CD14-positive monocyte (primary cell): ENCODE measurements at regions of chr5 and their contacts with region 1.

Region 1: DNA sequence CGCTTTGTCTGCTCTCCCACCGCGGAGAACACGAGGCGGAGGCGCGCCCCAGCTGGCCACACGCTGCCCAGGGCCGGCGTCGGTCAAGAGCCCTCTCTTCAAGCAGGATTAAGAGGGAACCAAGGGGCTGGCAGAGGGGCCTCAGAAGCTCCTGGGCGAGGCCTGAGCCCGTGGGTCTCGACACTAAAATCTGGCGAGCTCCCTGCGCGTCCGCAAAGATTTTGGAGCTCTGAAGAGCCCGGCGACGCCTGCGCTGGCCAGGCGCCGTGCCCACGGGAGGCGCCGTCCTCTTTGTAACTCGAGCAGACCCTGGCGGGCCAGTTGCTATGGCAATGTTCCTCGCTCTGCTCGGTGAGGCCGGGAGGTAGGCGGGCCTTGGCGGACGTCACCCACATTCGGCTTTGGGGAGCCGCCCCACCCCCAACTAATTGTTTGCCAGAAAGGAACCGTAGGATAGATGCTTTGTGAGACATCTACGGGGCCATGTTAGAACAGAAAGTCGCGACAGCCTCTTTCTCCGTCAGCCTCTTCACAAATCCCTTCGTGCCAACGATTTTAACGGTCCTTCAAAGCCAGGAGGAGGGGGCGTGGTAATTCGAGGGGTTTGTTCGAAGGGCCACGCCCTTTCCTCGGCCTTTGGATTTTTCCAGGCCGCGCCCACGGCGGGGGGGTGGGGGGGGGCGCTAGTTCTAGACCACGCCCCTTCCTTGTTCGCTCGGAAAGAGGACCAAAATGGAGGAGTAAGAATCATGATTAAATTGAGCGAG is 714 bp upstream of the CNOT8 start:
- DNase-seq: peak; percentile 89 to 91 (median 91)
- H3K4me3 ChIP-seq: peak overlapping the region; percentile 87 to 96 (median 89)
- H3K4me3 Mint-ChIP-seq: peak overlapping the region; percentile 77 to 96
- H3K27ac ChIP-seq: peak overlapping the region; percentile 96 to 98
- H3K27ac Mint-ChIP-seq: peak overlapping the region; percentile 93 to 99 (median 99)
- H3K4me1 ChIP-seq: peaks cover 37 to 57% of the 10 kb centered on the region in 2 donors
- H3K4me1 Mint-ChIP-seq: peaks cover 46% of the 10 kb centered on the region
- H3K27me3 ChIP-seq: no peaks in the 10 kb centered on the region
- H3K27me3 Mint-ChIP-seq: peaks cover 0 to 5% (median 2%) of the 10 kb centered on the region in 3 donors
- CTCF ChIP-seq: no peak

Region 2: DNA sequence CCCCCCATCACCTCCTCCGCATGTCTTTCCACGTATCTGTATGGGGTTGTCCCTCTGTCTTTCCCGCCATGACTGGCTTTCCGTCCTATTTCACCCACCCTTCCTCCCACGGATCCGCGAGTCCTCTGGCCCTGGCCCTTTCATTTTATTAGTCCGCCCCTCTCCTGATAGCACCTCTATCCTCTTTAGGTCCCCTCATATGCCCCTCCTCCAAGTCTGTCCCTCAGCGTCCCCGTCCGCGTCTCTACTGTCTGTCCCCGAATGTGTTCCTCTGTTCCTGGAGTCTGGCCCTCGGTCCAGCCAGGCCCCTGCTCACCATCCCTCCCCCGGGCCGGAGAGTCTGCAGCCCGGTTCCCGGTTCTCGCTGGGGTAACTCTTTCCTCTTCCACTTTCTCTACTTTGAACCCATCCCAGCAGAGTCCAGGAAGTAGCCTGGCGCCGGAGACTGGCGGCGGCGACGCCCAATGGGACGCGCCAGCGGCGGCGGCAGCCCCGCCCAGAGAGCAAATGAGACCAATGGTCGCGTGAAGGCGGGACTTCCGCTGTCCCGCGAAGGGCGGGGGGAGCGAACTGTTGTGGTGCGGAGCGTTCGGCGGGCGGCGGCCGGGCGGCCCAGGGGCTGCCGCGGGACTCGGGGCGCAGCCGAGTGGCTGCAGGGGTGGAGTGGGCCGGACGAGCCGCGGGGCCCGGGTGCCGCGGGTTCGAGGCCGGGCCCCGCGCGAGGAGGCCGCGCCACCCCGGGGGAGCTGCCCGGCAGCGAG is 412.1 kb before region 1 on chr5 and contains the start of gene SAP30L:
- intact Hi-C with region 1: loop called in 1 of 2 experiments (anchors 5 kb)
- DNase-seq: peak; percentile 93 to 95 (median 93)
- H3K4me3 ChIP-seq: peak within 1 kb of the TSS; percentile 91 to 94 (median 91)
- H3K4me3 Mint-ChIP-seq: peak within 1 kb of the TSS; percentile 98
- H3K27ac ChIP-seq: peak within 1 kb of the TSS; percentile 73 to 84
- H3K27ac Mint-ChIP-seq: peak within 1 kb of the TSS; percentile 87 to 96 (median 93)
- H3K4me1 ChIP-seq: peaks cover 34 to 43% of the 10 kb centered on the region in 2 donors
- H3K4me1 Mint-ChIP-seq: peaks cover 38% of the 10 kb centered on the region
- H3K27me3 ChIP-seq: no peaks in the 10 kb centered on the region
- H3K27me3 Mint-ChIP-seq: peaks cover 0 to 5% (median 0%) of the 10 kb centered on the region in 3 donors
- CTCF ChIP-seq: no peak
- polyA plus RNA-seq, gene SAP30L: 21.1 to 36.1 (median 29.4) TPM

Region 3: DNA sequence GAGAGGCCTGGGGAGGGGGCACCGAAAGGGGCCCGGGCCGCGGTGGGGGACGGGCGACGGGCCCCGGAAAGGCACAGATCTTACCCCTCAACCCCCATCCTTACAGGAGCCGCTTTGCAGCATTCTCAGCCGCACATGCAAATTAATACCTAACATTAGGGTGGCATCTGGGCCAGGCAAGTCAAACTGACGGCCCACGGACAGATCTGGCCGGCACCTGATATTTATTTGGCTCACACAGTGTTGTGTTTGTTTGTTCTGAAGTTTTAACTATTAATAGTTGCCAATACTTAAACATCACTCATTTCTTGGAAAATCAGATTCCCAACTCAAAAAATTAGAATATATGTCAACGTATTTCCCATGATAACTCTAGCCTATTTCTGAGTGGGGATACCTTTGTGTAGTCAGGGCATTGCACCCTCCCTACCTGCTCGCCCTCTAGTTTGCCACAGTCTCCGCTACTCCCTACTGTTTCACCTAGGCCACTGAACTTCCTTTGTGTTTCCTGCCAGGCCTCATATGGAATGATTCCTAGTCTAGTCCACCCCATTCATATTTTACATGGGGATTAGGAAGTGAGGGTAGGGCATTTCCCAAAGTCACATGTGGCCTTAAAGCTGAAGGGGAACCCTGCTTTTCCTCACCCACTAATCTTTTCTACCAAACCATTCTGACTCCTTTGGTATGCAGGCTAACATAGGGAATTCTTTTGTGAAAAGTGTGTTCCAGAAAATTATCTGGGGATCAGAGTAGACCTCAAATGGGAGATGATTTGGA is 174.4 kb before region 1 on chr5:
- intact Hi-C with region 1: loop called (anchors 2 to 10 kb)
- DNase-seq: peak in 2 of 3 donors; percentile 40 to 70
- H3K4me3 ChIP-seq: peak overlapping the region; percentile 51 to 74 (median 65)
- H3K4me3 Mint-ChIP-seq: peak overlapping the region; percentile 78 to 83
- H3K27ac ChIP-seq: peak overlapping the region; percentile 74
- H3K27ac Mint-ChIP-seq: peak overlapping the region; percentile 57 to 93 (median 82)
- H3K4me1 ChIP-seq: peaks cover 13 to 23% of the 10 kb centered on the region in 2 donors
- H3K4me1 Mint-ChIP-seq: peaks cover 17% of the 10 kb centered on the region
- H3K27me3 ChIP-seq: no peaks in the 10 kb centered on the region
- H3K27me3 Mint-ChIP-seq: peaks cover 0 to 4% (median 1%) of the 10 kb centered on the region in 3 donors
- CTCF ChIP-seq: no peak

Region 4: GRCh38 chr5:154754460-154755360 is 103.0 kb before region 1 on chr5:
- intact Hi-C with region 1: loop called (anchors 2 kb)
- DNase-seq: peak; percentile 96 to 98 (median 98)
- H3K4me3 ChIP-seq: peak overlapping the region; percentile 67 to 96 (median 91)
- H3K4me3 Mint-ChIP-seq: peak overlapping the region; percentile 90 to 93
- H3K27ac ChIP-seq: peak overlapping the region; percentile 79 to 96
- H3K27ac Mint-ChIP-seq: peak overlapping the region; percentile 87 to 96 (median 94)
- H3K4me1 ChIP-seq: peaks cover 30 to 35% of the 10 kb centered on the region in 2 donors
- H3K4me1 Mint-ChIP-seq: peaks cover 40% of the 10 kb centered on the region
- H3K27me3 ChIP-seq: no peaks in the 10 kb centered on the region
- H3K27me3 Mint-ChIP-seq: no peaks in the 10 kb centered on the region
- CTCF ChIP-seq: no peak

Region 5: DNA sequence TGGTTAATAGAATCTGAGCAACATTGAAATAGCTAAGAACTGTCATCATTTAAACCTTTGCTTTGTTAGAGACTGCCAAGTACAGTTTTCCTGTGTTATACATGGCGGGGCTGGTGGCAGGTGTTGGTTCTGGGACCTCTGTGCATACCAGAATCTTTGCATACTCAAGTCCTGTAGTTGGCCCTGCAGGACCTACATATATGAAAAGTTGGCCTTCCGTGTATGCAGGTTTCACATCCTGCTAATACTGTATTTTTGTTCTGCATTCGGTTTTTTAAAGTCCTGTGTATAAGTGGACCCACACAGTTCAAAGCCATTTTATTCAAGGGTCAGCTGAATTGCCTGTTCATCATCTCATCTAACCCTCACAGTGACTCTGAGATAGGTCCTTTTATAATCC is 66.2 kb before region 1 on chr5:
- intact Hi-C with region 1: no loop called
- DNase-seq: no peak
- H3K4me3 ChIP-seq: no peak overlapping the region
- H3K4me3 Mint-ChIP-seq: no peak overlapping the region
- H3K27ac ChIP-seq: peak overlapping the region in 1 of 2 donors; percentile 38
- H3K27ac Mint-ChIP-seq: peak overlapping the region in 1 of 7 donors; percentile 51
- H3K4me1 ChIP-seq: peaks cover 0 to 5% of the 10 kb centered on the region in 2 donors
- H3K4me1 Mint-ChIP-seq: peaks cover 20% of the 10 kb centered on the region
- H3K27me3 ChIP-seq: no peaks in the 10 kb centered on the region
- H3K27me3 Mint-ChIP-seq: peaks cover 0 to 1% (median 0%) of the 10 kb centered on the region in 3 donors
- CTCF ChIP-seq: no peak

Region 6: DNA sequence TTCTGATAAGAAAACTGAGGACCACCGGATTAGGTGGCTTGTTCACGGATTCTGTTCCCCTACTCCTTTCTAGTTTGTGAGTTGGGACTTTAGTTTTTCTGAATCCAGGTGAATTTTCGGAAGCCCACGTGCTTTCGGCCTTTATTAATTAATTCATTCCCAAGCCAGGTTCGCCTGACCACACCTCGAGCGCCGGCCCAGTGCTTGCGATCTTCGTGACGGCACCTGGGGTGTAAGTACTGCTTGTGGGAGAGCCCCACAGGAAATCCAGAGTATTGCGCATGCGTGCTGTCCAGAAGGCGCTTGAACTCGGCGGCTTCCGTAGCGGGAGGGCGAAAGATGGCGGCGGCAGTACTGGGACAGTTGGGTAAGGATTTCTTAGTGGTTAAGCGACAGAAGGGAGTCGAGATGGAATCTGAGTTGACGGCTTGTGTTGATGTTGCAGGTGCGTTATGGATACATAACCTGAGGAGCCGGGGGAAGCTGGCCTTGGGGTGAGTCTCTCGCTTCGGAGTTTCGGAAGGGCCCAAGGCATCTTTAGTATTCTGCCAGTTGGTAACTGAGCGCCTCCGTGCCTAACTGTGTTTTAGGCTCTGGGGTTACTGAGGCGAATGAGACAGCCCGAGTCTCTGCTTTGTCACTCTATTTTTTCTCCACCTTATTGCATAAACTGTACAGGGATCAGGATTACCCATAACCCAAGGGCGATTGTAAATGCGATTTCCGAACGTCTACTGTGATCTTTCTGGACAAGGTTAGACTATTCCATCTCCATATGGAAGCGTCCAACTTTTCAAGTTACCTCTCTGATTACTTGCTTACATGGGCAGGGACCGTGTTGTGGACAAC is 83.3 kb after region 1 on chr5 and contains the start of gene MRPL22:
- intact Hi-C with region 1: loop called (anchors 5 kb)
- DNase-seq: peak; percentile 91 to 95 (median 93)
- H3K4me3 ChIP-seq: peak within 1 kb of the TSS; percentile 75 to 91 (median 86)
- H3K4me3 Mint-ChIP-seq: peak within 1 kb of the TSS; percentile 96 to 100
- H3K27ac ChIP-seq: peak within 1 kb of the TSS; percentile 66 to 85
- H3K27ac Mint-ChIP-seq: peak within 1 kb of the TSS; percentile 89 to 98 (median 93)
- H3K4me1 ChIP-seq: peaks cover 28 to 31% of the 10 kb centered on the region in 2 donors
- H3K4me1 Mint-ChIP-seq: peaks cover 21% of the 10 kb centered on the region
- H3K27me3 ChIP-seq: no peaks in the 10 kb centered on the region
- H3K27me3 Mint-ChIP-seq: peaks cover 0 to 3% (median 0%) of the 10 kb centered on the region in 3 donors
- CTCF ChIP-seq: no peak
- polyA plus RNA-seq, gene MRPL22: 11.6 to 66.1 (median 56.7) TPM